HepG2 (cell line): ENCODE measurements at regions of chr5 and their contacts with region 1.

Region 1: DNA sequence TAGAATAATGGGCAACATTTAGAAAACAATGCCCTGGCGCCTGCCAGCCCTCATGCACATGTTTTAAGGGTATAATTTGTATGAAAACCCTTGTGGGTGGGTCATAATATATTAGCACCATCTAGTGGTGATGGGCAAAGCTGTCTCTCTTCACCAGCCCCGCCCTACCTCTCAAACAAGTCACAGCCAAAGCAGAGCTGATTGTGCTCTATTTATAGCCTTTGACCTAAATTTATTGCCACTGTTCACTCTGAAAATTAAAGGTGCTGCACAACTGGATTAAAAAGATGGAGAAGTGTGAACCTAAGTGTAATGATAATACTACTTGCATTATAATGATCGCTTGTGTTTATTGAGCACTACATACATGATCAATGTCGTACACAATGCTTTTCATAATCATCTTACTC is 131.9 kb upstream of the ANKH start:
- DNase-seq: peak; percentile 59
- ATAC-seq: peak; percentile 87
- H3K4me3 ChIP-seq: no peak overlapping the region
- H3K27ac ChIP-seq: no peak overlapping the region
- H3K4me1 ChIP-seq: peaks cover 40% of the 10 kb centered on the region
- H3K27me3 ChIP-seq: peaks cover 0 to 4% of the 10 kb centered on the region in 2 experiments; a peak in 1 of 5 replicates
- CTCF ChIP-seq: peak; percentile 83
- EP300 ChIP-seq: no peak
- POLR2A ChIP-seq: no peak
- RAD21 ChIP-seq: peak; percentile 65; the same call in 1 of the 2 replicates

Region 2: GRCh38 chr5:14664302-14665100 is 339.0 kb before region 1 on chr5 and contains the start of gene OTULIN:
- CTCF ChIA-PET with region 1: no interaction called
- POLR2A ChIA-PET with region 1: no interaction called
- in situ Hi-C with region 1: no loop called
- intact Hi-C with region 1: loop called (anchors 2 kb)
- DNase-seq: peak; percentile 79
- ATAC-seq: peak; percentile 86
- H3K4me3 ChIP-seq: peak within 1 kb of the TSS; percentile 83 to 91 (median 86)
- H3K27ac ChIP-seq: peak within 1 kb of the TSS; percentile 82
- H3K4me1 ChIP-seq: peaks cover 65% of the 10 kb centered on the region
- H3K27me3 ChIP-seq: no peaks in the 10 kb centered on the region
- CTCF ChIP-seq: no peak; the same call in 1 of the 2 replicates
- EP300 ChIP-seq: no peak
- POLR2A ChIP-seq: peak; percentile 74 to 96
- RAD21 ChIP-seq: no peak
- total RNA-seq, gene OTULIN: 31.9 and 34.8 TPM in 2 replicates

Region 3: DNA sequence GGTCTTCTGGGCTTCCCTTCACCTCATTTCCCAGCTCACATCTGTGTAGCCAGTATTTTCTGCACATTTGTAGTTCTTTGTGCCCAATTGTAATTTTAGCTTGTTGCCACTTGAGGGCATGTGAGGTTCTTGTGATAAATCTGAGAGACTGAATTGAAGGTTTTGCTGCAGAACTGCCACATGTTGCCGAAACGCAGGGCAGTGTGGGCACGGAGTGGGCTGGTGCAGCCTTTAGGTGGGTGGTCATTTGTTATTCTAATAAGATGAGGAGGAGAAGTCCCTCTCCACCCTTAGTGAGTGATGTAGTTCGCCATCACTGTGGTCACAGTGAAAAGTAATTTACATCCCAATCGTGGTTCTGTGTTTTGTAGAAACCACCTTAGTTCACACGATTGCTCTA is 317.8 kb before region 1 on chr5:
- CTCF ChIA-PET with region 1: interaction called, 5 read pairs
- POLR2A ChIA-PET with region 1: no interaction called
- in situ Hi-C with region 1: no loop called
- intact Hi-C with region 1: loop called (anchors 2 kb)
- DNase-seq: peak; percentile 48
- ATAC-seq: peak; percentile 63; the same call in 2 of the 3 replicates
- H3K4me3 ChIP-seq: no peak overlapping the region
- H3K27ac ChIP-seq: no peak overlapping the region
- H3K4me1 ChIP-seq: no peaks in the 10 kb centered on the region
- H3K27me3 ChIP-seq: no peaks in the 10 kb centered on the region
- CTCF ChIP-seq: peak; percentile 62
- EP300 ChIP-seq: no peak
- POLR2A ChIP-seq: no peak
- RAD21 ChIP-seq: 0 out of 2 replicates have a peak, but pooled peaks have one; percentile 28

Region 4: GRCh38 chr5:14871210-14872069 is 132.1 kb before region 1 on chr5 and contains the start of gene ANKH:
- CTCF ChIA-PET with region 1: no interaction called
- POLR2A ChIA-PET with region 1: no interaction called
- in situ Hi-C with region 1: no loop called
- intact Hi-C with region 1: loop called (anchors 2 kb)
- DNase-seq: peak; percentile 51
- ATAC-seq: peak; percentile 88
- H3K4me3 ChIP-seq: peak within 1 kb of the TSS; percentile 80 to 93 (median 88)
- H3K27ac ChIP-seq: peak within 1 kb of the TSS; percentile 54
- H3K4me1 ChIP-seq: peaks cover 46% of the 10 kb centered on the region
- H3K27me3 ChIP-seq: no peaks in the 10 kb centered on the region; a peak in 2 of 5 replicates
- CTCF ChIP-seq: no peak; the same call in 1 of the 2 replicates
- EP300 ChIP-seq: no peak
- POLR2A ChIP-seq: no peak
- RAD21 ChIP-seq: no peak
- total RNA-seq, gene ANKH: 20.5 and 25.0 TPM in 2 replicates

Region 5: GRCh38 chr5:14946815-14947640 is 56.5 kb before region 1 on chr5:
- CTCF ChIA-PET with region 1: interaction called, 12 read pairs
- POLR2A ChIA-PET with region 1: no interaction called
- in situ Hi-C with region 1: no loop called
- intact Hi-C with region 1: loop called (anchors 2 kb)
- DNase-seq: peak; percentile 41
- ATAC-seq: peak; percentile 86
- H3K4me3 ChIP-seq: no peak overlapping the region
- H3K27ac ChIP-seq: no peak overlapping the region
- H3K4me1 ChIP-seq: peaks cover 20% of the 10 kb centered on the region
- H3K27me3 ChIP-seq: no peaks in the 10 kb centered on the region
- CTCF ChIP-seq: peak; percentile 71
- EP300 ChIP-seq: no peak
- POLR2A ChIP-seq: no peak
- RAD21 ChIP-seq: peak; percentile 29; the same call in 1 of the 2 replicates

Region 6: GRCh38 chr5:14958196-14958595 is 45.3 kb before region 1 on chr5:
- CTCF ChIA-PET with region 1: no interaction called
- POLR2A ChIA-PET with region 1: no interaction called
- in situ Hi-C with region 1: loop called (anchors 5 kb)
- intact Hi-C with region 1: loop called (anchors 1 kb)
- DNase-seq: no peak
- ATAC-seq: no peak
- H3K4me3 ChIP-seq: no peak overlapping the region
- H3K27ac ChIP-seq: no peak overlapping the region
- H3K4me1 ChIP-seq: peaks cover 36% of the 10 kb centered on the region
- H3K27me3 ChIP-seq: peaks cover 1 to 8% of the 10 kb centered on the region in 2 experiments; a peak in 3 of 5 replicates
- CTCF ChIP-seq: no peak
- EP300 ChIP-seq: no peak
- POLR2A ChIP-seq: no peak
- RAD21 ChIP-seq: no peak